Left ventricle myocardium inferior (tissue), 1 donor: ENCODE measurements at regions of chr2 and their contacts with region 1.

Region 1: GRCh38 chr2:20015472-20016083 is 3.1 kb upstream of the MATN3 start:
- DNase-seq: no peak
- H3K4me3 ChIP-seq: no peak overlapping the region
- H3K27ac ChIP-seq: no peak overlapping the region
- H3K4me1 ChIP-seq: peaks cover 16% of the 10 kb centered on the region
- H3K27me3 ChIP-seq: peaks cover 16% of the 10 kb centered on the region
- CTCF ChIP-seq: peak; percentile 70

Region 2: GRCh38 chr2:20097879-20098714 is 82.5 kb after region 1 on chr2:
- intact Hi-C with region 1: loop called (anchors 1 kb)
- DNase-seq: peak; percentile 80
- H3K4me3 ChIP-seq: no peak overlapping the region
- H3K27ac ChIP-seq: no peak overlapping the region
- H3K4me1 ChIP-seq: peaks cover 8% of the 10 kb centered on the region
- H3K27me3 ChIP-seq: no peaks in the 10 kb centered on the region
- CTCF ChIP-seq: peak; percentile 93

Region 3: DNA sequence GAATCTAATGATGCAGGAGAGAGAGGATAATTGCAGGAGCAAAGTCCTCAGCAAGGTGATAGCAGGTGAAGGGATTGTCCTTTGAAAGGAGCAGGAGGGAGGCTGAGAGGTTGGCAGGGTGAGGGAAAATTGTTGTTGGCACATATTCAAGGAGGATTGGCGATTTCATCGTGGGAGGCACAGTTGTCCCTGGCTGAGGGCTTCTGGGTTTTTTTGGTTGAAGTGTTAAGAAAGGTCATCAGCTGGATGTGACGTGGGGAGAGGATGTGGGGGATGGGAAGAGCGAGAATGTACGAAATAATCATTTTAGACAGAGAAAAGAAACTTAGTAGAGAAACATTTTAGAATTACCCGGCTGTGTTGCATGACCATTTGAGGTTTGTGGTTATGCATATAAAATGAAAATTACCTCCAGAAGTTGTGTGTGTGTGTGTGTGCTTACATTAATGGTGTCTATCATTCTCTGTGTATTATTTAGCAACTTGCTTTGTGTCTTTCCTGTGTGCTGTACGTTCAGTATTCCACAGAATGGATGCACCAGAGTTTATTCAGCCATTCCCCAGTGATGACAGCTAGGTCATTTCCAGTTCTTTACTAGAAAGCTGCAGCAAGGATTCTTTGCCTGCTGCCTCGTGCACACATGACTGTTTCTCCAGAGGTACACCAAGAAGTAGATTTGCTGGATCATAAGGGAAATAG is 141.8 kb after region 1 on chr2:
- intact Hi-C with region 1: no loop called
- DNase-seq: no peak
- H3K4me3 ChIP-seq: no peak overlapping the region
- H3K27ac ChIP-seq: no peak overlapping the region
- H3K4me1 ChIP-seq: no peaks in the 10 kb centered on the region
- H3K27me3 ChIP-seq: peaks cover 35% of the 10 kb centered on the region
- CTCF ChIP-seq: no peak